GM12878 (cell line): ENCODE measurements at regions of chr5 and their contacts with region 1.

Region 1: GRCh38 chr5:147188200-147189108 is 46.4 kb upstream of the STK32A start:
- DNase-seq: no peak
- ATAC-seq: peak; percentile 90
- H3K4me3 ChIP-seq: no peak overlapping the region
- H3K27ac ChIP-seq: no peak overlapping the region
- H3K4me1 ChIP-seq: no peaks in the 10 kb centered on the region
- H3K27me3 ChIP-seq: no peaks in the 10 kb centered on the region; a peak in 1 of 4 replicates
- CTCF ChIP-seq: peak; percentile 68 to 77 (median 70); a peak in 5 of 6 replicates
- EP300 ChIP-seq: no peak
- POLR2A ChIP-seq: no peak
- RAD21 ChIP-seq: peak; percentile 75

Region 2: DNA sequence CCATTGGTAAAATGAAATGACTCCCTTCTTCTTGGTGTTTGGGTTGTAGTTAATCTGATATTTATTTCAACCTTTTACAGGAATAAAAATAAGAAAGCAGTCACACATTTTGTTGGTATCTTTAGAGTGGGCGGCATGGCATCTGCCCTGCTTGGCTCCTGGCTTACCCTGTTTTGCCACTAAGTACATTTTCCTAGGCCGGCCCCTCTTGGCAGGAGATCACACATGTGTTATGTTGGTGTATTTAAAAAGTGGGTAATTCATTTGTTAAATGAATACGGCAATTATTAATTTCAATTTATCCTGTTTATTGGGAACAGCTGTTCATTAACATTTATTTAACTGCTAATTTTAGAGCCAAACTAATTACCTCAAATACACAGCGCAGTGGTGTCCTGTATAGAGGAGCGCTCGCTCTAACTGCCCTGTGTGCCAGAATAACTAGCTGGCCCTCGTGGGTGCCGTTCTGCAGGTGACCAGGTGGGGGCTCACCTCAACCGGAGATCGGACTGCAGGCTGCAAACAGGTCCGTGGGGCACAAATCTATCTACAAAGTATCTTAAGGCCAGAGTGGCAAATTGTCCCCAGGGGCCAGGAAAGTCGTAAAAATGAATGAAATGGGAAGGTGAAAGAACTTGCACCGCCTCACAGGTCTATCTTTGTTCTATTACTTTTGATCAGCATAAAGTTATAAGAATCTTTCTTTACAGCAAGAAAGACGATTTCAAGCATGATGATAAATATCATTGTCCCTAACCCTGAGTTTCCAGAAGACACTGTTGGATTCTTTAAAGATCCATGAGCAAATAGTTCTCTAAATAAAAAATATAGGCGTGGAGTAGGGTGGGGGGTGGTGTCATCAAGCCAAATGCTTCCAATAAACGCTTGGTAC is 646.2 kb before region 1 on chr5:
- CTCF ChIA-PET with region 1: interaction called, 46 read pairs
- POLR2A ChIA-PET with region 1: no interaction called
- RAD21 ChIA-PET with region 1: interaction called, 20 read pairs
- SMC1A ChIA-PET with region 1: interaction called, 11 read pairs
- in situ Hi-C with region 1: loop called (anchors 5 kb)
- intact Hi-C with region 1: no loop called
- DNase-seq: no peak
- ATAC-seq: peak; percentile 100
- H3K4me3 ChIP-seq: no peak overlapping the region
- H3K27ac ChIP-seq: no peak overlapping the region
- H3K4me1 ChIP-seq: no peaks in the 10 kb centered on the region
- H3K27me3 ChIP-seq: no peaks in the 10 kb centered on the region
- CTCF ChIP-seq: peak; percentile 78 to 90 (median 83)
- EP300 ChIP-seq: no peak
- POLR2A ChIP-seq: no peak
- RAD21 ChIP-seq: peak; percentile 86

Region 3: GRCh38 chr5:146662229-146662628 is 526.2 kb before region 1 on chr5:
- CTCF ChIA-PET with region 1: no interaction called
- POLR2A ChIA-PET with region 1: no interaction called
- RAD21 ChIA-PET with region 1: interaction called, 4 read pairs
- SMC1A ChIA-PET with region 1: interaction called, 4 read pairs
- in situ Hi-C with region 1: no loop called
- intact Hi-C with region 1: loop called (anchors 10 kb)
- DNase-seq: no peak
- ATAC-seq: no peak
- H3K4me3 ChIP-seq: no peak overlapping the region
- H3K27ac ChIP-seq: no peak overlapping the region
- H3K4me1 ChIP-seq: no peaks in the 10 kb centered on the region
- H3K27me3 ChIP-seq: no peaks in the 10 kb centered on the region
- CTCF ChIP-seq: peak; percentile 44 to 63 (median 52); a peak in 4 of 6 replicates
- EP300 ChIP-seq: no peak
- POLR2A ChIP-seq: no peak
- RAD21 ChIP-seq: peak; percentile 27; the same call in 1 of the 2 replicates

Region 4: GRCh38 chr5:147098233-147098790 is 90.1 kb before region 1 on chr5:
- CTCF ChIA-PET with region 1: interaction called, 107 read pairs
- POLR2A ChIA-PET with region 1: no interaction called
- RAD21 ChIA-PET with region 1: interaction called, 31 read pairs
- SMC1A ChIA-PET with region 1: interaction called, 50 read pairs
- in situ Hi-C with region 1: no loop called
- intact Hi-C with region 1: loop called (anchors 1 kb)
- DNase-seq: no peak
- ATAC-seq: peak; percentile 67; the same call in 2 of the 3 replicates
- H3K4me3 ChIP-seq: no peak overlapping the region
- H3K27ac ChIP-seq: no peak overlapping the region
- H3K4me1 ChIP-seq: no peaks in the 10 kb centered on the region
- H3K27me3 ChIP-seq: no peaks in the 10 kb centered on the region
- CTCF ChIP-seq: peak; percentile 42 to 54 (median 50)
- EP300 ChIP-seq: no peak
- POLR2A ChIP-seq: no peak
- RAD21 ChIP-seq: 0 out of 2 replicates have a peak, but pooled peaks have one; percentile 26

Region 5: GRCh38 chr5:147177125-147177840 is 11.2 kb before region 1 on chr5:
- CTCF ChIA-PET with region 1: interaction called, 31 read pairs
- POLR2A ChIA-PET with region 1: no interaction called
- RAD21 ChIA-PET with region 1: interaction called, 18 read pairs
- SMC1A ChIA-PET with region 1: interaction called, 18 read pairs
- in situ Hi-C with region 1: no loop called
- intact Hi-C with region 1: no loop called
- DNase-seq: no peak
- ATAC-seq: no peak
- H3K4me3 ChIP-seq: no peak overlapping the region
- H3K27ac ChIP-seq: no peak overlapping the region
- H3K4me1 ChIP-seq: no peaks in the 10 kb centered on the region
- H3K27me3 ChIP-seq: no peaks in the 10 kb centered on the region
- CTCF ChIP-seq: no peak
- EP300 ChIP-seq: no peak
- POLR2A ChIP-seq: no peak
- RAD21 ChIP-seq: no peak

Region 6: DNA sequence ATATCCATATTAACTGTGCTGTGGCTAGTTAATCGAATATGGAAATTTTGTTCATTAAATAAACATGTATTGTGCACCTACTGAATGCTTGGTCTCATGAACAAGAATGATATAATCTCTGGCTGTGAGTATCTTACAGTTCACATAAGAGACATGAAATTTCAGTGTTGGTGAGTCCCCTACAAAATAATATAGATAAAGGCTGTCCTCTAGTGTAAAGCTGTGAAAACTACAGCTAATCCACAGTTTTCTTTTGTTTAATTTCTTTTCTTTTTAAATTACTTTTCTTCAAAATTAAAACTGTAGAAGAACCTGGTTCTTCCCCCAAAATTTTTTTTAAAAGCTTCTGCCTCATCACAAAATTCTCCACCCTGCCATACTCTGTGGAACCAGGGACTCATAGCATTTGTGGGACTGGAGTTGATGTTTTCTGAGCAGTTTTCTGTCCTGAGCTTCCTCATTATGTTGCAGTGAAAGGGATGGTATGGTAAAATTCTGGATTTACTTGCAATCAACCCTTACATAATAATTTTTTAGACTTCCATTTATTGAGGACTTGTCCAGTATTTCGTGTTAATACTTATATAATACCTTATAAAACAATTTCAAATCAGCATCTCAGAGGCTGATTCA is 181.4 kb after region 1 on chr5:
- CTCF ChIA-PET with region 1: interaction called, 27 read pairs
- POLR2A ChIA-PET with region 1: no interaction called
- RAD21 ChIA-PET with region 1: interaction called, 18 read pairs
- SMC1A ChIA-PET with region 1: interaction called, 11 read pairs
- in situ Hi-C with region 1: no loop called
- intact Hi-C with region 1: no loop called
- DNase-seq: no peak
- ATAC-seq: peak; percentile 53; the same call in 2 of the 3 replicates
- H3K4me3 ChIP-seq: no peak overlapping the region
- H3K27ac ChIP-seq: no peak overlapping the region
- H3K4me1 ChIP-seq: no peaks in the 10 kb centered on the region
- H3K27me3 ChIP-seq: no peaks in the 10 kb centered on the region; a peak in 1 of 4 replicates
- CTCF ChIP-seq: peak; percentile 12 to 49 (median 19); a peak in 2 of 6 replicates
- EP300 ChIP-seq: no peak
- POLR2A ChIP-seq: no peak
- RAD21 ChIP-seq: no peak

Region 7: DNA sequence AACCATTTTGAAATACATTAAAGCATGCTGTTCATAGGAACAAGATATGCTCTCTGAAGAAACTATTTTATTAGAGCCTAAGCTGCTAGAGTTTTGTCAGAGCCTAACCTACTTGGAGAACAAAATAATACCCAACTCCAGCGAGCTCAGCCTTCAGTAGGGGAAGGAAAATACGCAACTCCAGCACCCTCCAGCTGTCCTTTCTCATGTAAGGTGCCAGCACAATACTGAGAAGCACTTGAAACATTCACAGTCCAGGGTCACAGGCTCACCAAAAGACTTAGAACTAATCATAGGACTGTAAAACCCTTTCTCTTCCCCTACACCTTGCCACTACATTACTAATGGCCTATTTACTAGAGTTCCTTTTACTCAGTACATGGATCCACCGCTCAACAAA is 302.5 kb after region 1 on chr5:
- CTCF ChIA-PET with region 1: no interaction called
- POLR2A ChIA-PET with region 1: no interaction called
- RAD21 ChIA-PET with region 1: no interaction called
- SMC1A ChIA-PET with region 1: no interaction called
- in situ Hi-C with region 1: no loop called
- intact Hi-C with region 1: no loop called
- DNase-seq: no peak
- ATAC-seq: no peak; the same call in 2 of the 3 replicates
- H3K4me3 ChIP-seq: no peak overlapping the region
- H3K27ac ChIP-seq: no peak overlapping the region
- H3K4me1 ChIP-seq: no peaks in the 10 kb centered on the region
- H3K27me3 ChIP-seq: no peaks in the 10 kb centered on the region; a peak in 1 of 4 replicates
- CTCF ChIP-seq: no peak
- EP300 ChIP-seq: no peak
- POLR2A ChIP-seq: no peak
- RAD21 ChIP-seq: no peak

Region 8: DNA sequence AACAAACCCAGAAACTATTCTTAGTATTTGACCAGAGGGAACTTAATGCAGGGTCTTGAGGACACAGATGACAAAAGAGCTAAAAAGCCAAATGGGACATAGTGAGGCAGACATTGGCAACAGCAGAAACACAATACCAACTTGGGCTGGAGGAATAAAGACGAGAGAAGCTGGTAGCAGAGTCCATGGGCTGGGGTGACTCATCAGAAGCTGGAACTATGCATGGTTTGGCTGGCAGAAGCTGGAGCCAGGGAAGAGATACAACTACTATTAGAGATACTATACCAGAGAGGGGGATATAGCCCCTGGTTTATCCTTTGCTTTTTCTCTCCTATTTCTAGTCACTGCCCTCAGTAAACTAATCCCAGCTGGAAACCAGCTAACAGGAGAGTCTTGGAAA is 350.6 kb after region 1 on chr5:
- CTCF ChIA-PET with region 1: no interaction called
- POLR2A ChIA-PET with region 1: no interaction called
- RAD21 ChIA-PET with region 1: no interaction called
- SMC1A ChIA-PET with region 1: no interaction called
- in situ Hi-C with region 1: no loop called
- intact Hi-C with region 1: no loop called
- DNase-seq: no peak
- ATAC-seq: no peak
- H3K4me3 ChIP-seq: no peak overlapping the region
- H3K27ac ChIP-seq: no peak overlapping the region
- H3K4me1 ChIP-seq: no peaks in the 10 kb centered on the region
- H3K27me3 ChIP-seq: no peaks in the 10 kb centered on the region
- CTCF ChIP-seq: no peak
- EP300 ChIP-seq: no peak
- POLR2A ChIP-seq: no peak
- RAD21 ChIP-seq: no peak